WTC11 (cell line): ENCODE measurements at regions of chr11 and their contacts with region 1.

Region 1: GRCh38 chr11:2400069-2400760 is at the start of gene TSSC4:
- DNase-seq: peak; percentile 98
- ATAC-seq: peak; percentile 90
- H3K4me3 Mint-ChIP-seq: peak within 1 kb of the TSS; percentile 83
- H3K27ac Mint-ChIP-seq: 0 out of 2 replicates have a peak within 1 kb of the TSS, but pooled peaks have one; percentile 63
- H3K4me1 Mint-ChIP-seq: peaks cover 5% of the 10 kb centered on the region; the same call in 1 of the 2 replicates
- H3K27me3 Mint-ChIP-seq: no peaks in the 10 kb centered on the region
- CTCF ChIP-seq: peak; percentile 86
- total RNA-seq, gene TSSC4: 41.2 to 45.8 TPM (median 41.4 TPM) in 3 replicates

Region 2: DNA sequence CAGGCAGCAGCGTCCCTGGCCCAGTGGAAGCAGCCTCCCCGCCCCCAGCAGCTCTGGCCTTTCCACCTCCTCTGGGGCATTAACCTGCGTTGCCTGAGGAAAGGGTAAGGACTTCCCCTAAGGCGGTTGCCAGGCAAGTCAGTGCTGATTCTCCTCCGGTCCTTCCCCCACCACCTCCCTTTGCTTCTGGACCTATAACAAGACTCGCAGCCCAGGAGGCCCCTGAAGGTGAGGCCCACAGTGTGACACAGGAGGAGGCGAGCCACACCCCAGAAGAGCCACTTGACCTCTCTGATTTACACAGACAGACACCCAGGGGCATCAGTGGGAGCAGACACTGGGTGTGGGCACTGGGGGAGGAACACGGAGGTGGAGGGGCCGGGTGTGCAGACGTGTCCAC is 165.3 kb before region 1 on chr11:
- CTCF ChIA-PET with region 1: no interaction called
- POLR2A ChIA-PET with region 1: no interaction called
- DNase-seq: peak; percentile 40
- ATAC-seq: peak; percentile 86
- H3K4me3 Mint-ChIP-seq: no peak overlapping the region
- H3K27ac Mint-ChIP-seq: no peak overlapping the region
- H3K4me1 Mint-ChIP-seq: peaks cover 10% of the 10 kb centered on the region
- H3K27me3 Mint-ChIP-seq: peaks cover 58% of the 10 kb centered on the region
- CTCF ChIP-seq: no peak

Region 3: DNA sequence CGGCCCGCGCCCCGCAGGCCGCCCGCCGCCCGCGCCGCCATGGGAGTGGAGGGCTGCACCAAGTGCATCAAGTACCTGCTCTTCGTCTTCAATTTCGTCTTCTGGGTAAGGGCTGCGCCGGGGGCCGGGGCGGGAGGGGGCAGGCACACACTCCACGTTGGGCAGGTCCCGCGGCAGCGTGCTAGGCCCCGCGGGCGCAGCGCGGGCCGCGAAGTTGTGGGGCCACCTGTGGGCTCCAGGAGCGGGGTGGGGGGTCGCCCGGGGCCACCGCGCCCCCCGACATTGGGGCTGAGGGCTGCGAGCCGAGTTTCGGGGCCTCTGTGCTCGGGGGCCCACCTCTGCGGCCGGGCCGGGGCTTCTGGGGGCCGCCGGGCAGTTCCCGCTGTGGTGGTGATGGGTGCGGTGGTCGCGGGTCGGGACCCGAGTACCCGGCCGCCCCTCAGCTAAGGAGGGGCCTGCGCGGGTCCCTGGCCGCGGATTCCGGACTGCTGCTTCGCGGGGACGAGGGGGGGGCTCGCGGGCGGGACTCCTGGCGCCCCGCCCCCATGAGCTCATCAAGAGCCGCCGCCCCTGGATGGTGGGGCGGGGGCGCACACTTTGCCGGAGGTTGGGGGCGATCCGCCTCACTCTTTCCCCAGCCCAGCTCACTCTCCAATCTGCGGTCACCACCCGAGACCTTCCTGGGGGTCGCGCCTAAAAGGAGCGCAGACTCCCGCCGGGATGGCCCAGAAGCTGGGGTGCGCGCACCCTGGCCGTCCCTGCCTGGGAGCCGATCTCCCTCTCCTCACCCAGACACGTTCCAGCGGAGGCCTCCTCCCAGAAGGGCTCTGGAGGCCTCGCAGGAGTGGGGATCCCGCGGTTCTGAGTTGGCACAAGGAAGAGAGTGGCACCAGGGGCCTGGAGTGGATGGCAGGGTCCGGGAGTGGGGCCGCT is 22.4 kb before region 1 on chr11:
- CTCF ChIA-PET with region 1: interaction called, 13 read pairs
- POLR2A ChIA-PET with region 1: interaction called, 7 read pairs
- DNase-seq: peak; percentile 65
- ATAC-seq: peak; percentile 25
- H3K4me3 Mint-ChIP-seq: peak overlapping the region; percentile 87
- H3K27ac Mint-ChIP-seq: no peak overlapping the region; the same call in 1 of the 2 replicates
- H3K4me1 Mint-ChIP-seq: peaks cover 18% of the 10 kb centered on the region
- H3K27me3 Mint-ChIP-seq: peaks cover 6% of the 10 kb centered on the region
- CTCF ChIP-seq: no peak

Region 4: DNA sequence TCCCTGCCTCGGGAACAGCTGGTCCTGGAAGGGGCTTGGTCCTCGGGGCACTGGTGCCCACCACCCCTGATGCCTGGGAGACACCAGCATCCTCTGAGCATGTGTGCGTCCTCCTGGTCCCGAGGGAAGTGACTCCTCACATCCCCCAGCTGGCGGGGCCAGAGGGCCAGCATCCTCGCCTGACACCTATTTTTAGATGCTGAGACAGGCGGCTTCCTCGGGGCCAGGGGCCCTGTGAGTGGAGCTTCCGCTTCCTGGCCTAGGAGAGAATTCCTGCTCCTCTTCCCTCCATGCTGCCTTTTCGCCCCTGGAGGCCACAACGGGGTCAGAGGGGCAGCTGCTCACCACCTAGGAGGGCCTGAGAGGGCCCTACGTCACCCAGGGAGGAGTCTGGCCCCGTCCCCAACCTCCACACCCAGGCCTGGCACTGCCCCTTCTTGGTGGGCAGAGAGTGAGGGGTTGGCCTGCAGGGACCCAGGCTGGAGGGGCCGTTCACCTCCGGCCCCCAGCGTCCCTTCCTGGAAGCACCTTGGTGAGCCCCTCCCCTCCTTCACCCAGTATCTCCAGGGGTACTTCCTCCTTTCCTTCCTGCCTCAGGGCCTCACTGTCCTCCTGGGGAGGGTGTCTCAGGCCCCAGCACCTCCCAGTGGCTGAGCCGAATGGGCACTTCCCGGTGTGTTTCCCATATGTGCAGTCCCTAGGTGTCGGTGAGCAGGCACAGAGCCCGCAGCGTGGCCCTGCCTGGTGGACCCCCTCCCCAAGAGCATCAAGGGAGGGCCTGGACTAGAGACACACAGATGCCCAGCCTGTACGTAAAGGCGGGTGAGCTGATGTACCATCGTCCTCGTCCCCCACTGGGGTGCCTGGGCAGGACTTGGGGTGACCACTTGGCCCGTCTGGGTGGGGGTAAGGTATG is 17.0 kb before region 1 on chr11:
- CTCF ChIA-PET with region 1: interaction called, 13 read pairs
- POLR2A ChIA-PET with region 1: interaction called, 4 read pairs
- DNase-seq: no peak
- ATAC-seq: no peak; the same call in 1 of the 2 replicates
- H3K4me3 Mint-ChIP-seq: no peak overlapping the region
- H3K27ac Mint-ChIP-seq: no peak overlapping the region; the same call in 1 of the 2 replicates
- H3K4me1 Mint-ChIP-seq: peaks cover 18% of the 10 kb centered on the region
- H3K27me3 Mint-ChIP-seq: no peaks in the 10 kb centered on the region
- CTCF ChIP-seq: no peak

Region 5: GRCh38 chr11:2446955-2447650 is 46.9 kb after region 1 on chr11:
- CTCF ChIA-PET with region 1: no interaction called
- POLR2A ChIA-PET with region 1: no interaction called
- DNase-seq: no peak
- ATAC-seq: no peak
- H3K4me3 Mint-ChIP-seq: no peak overlapping the region
- H3K27ac Mint-ChIP-seq: no peak overlapping the region
- H3K4me1 Mint-ChIP-seq: peaks cover 3% of the 10 kb centered on the region
- H3K27me3 Mint-ChIP-seq: peaks cover 85% of the 10 kb centered on the region
- CTCF ChIP-seq: no peak